BJ (cell line): ENCODE measurements at regions of chr19 and their contacts with region 1.

Region 1: GRCh38 chr19:46661020-46661731 is at the start of gene DACT3:
- DNase-seq: peak; percentile 99
- H3K4me3 ChIP-seq: peak within 1 kb of the TSS; percentile 75
- H3K27me3 ChIP-seq: no peaks in the 10 kb centered on the region
- CTCF ChIP-seq: no peak
- polyA plus RNA-seq, gene DACT3: 6.2 and 7.1 TPM in 2 replicates

Region 2: DNA sequence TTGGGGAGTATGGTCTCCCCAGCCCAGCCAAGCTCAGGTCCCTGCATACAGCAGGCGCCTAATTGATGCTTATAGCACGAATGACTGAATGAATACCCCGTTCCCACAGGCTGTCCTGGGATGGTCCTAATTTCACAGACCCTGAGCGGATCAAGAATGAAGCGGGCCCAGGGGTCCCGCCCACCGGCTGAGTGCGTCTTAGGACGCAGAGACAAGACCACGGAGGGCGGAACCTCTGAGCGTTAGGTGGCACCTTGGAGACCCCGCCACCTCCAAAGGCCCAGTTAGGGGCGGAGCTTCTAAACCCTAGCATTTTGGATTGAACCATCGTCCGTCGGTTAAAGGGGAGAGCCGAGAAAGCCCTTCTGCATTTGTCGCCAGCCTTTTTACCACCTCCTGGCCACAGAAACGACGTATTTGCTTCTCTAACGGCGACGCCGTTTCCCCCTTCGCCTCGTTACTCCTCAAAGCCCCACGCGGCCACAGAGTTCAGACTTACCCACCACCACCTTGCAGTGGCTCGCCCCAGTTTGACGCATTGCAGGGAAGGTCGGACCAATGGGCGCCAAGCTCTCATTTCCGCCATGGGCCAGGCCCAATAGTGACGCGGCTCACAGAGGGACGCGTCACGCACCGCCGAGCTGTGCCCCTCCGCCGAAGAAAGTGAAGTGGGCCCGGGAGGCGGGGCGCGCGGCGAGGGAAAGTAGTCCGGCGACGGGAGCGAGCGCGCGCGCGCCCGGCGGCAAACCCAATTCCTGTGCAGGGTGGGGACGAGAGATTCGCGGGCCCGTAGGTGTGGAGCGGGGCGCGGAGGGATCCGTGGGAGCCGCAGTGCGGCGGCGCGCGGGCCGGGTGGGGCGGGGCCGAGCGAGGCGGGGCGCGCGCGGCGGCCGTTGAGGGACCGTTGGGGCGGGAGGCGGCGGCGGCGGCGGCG is 60.5 kb before region 1 on chr19:
- CTCF ChIA-PET with region 1: interaction called, 347 read pairs
- POLR2A ChIA-PET with region 1: no interaction called
- DNase-seq: peak; percentile 70
- H3K4me3 ChIP-seq: peak overlapping the region; percentile 99
- H3K27me3 ChIP-seq: peaks cover 1% of the 10 kb centered on the region; the same call in 1 of the 2 replicates
- CTCF ChIP-seq: no peak

Region 3: GRCh38 chr19:46624958-46625661 is 36.1 kb before region 1 on chr19 and contains the start of gene PTGIR:
- CTCF ChIA-PET with region 1: interaction called, 347 read pairs
- POLR2A ChIA-PET with region 1: interaction called, 3 read pairs
- DNase-seq: no peak
- H3K4me3 ChIP-seq: peak within 1 kb of the TSS; percentile 52
- H3K27me3 ChIP-seq: no peaks in the 10 kb centered on the region
- CTCF ChIP-seq: no peak
- polyA plus RNA-seq, gene PTGIR: 16.9 and 27.8 TPM in 2 replicates

Region 4: GRCh38 chr19:46678110-46678732 is 17.0 kb after region 1 on chr19:
- CTCF ChIA-PET with region 1: interaction called, 21 read pairs
- POLR2A ChIA-PET with region 1: no interaction called
- DNase-seq: no peak
- H3K4me3 ChIP-seq: no peak overlapping the region
- H3K27me3 ChIP-seq: no peaks in the 10 kb centered on the region
- CTCF ChIP-seq: no peak